ENCODE measurements at regions of chr1 and their contacts with region 1.

Region 1: DNA sequence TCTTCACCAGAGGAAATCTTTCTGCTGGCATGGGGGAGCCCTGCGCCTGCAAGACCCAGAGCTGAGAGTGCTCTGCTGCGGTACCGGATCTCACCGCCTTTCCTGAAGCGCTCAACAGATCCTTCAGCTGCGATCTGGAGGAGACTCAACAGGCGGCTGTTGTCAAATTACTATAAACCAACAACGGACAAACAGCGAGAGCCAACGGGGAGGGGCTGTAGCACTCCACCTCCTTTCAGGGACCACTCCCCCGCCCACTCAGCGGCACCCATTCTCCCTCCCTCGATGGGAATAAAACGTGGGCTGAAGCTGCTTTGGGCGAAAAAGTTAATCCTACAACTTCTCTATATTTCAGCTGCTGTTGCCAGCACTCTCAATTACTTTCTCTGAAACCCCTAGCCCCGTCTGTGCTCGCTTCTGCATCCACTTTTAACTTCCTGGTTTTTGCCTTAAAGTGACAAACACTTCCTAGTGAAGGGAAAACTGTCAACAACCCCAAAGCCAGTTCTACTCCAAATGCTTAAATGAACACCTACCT is at the start of gene FMO5:
- DNase-seq: peak; percentile 71
- H3K4me3 Mint-ChIP-seq: peak within 1 kb of the TSS; percentile 90
- H3K27ac Mint-ChIP-seq: no peak within 1 kb of the TSS
- H3K4me1 Mint-ChIP-seq: peaks cover 7% of the 10 kb centered on the region
- H3K27me3 Mint-ChIP-seq: no peaks in the 10 kb centered on the region
- total RNA-seq, gene FMO5: 0.14 TPM in 1 of 2 experiments, not detected in the other

Region 2: DNA sequence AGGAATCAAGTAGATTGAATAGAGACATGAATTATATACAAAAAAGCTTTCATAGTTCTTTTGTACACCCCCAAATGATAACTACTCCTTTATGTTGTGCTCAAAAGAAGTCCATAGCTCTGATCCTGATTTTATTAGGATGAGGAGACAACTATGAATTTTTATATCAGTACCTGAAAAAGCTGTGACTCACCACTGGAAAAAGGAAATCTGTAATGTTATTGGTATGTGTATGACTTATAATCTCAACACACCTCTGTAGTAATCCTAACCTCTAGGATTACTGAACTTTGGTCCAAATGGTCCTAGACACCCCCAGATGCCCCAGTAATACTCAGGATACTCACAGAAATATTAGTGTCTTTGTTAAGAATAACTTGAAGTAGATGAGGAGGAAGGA is 63.2 kb before region 1 on chr1:
- CTCF ChIA-PET with region 1: no interaction called
- intact Hi-C with region 1: no loop called
- DNase-seq: no peak
- H3K4me3 Mint-ChIP-seq: no peak overlapping the region
- H3K27ac Mint-ChIP-seq: no peak overlapping the region
- H3K4me1 Mint-ChIP-seq: no peaks in the 10 kb centered on the region
- H3K27me3 Mint-ChIP-seq: no peaks in the 10 kb centered on the region

Region 3: DNA sequence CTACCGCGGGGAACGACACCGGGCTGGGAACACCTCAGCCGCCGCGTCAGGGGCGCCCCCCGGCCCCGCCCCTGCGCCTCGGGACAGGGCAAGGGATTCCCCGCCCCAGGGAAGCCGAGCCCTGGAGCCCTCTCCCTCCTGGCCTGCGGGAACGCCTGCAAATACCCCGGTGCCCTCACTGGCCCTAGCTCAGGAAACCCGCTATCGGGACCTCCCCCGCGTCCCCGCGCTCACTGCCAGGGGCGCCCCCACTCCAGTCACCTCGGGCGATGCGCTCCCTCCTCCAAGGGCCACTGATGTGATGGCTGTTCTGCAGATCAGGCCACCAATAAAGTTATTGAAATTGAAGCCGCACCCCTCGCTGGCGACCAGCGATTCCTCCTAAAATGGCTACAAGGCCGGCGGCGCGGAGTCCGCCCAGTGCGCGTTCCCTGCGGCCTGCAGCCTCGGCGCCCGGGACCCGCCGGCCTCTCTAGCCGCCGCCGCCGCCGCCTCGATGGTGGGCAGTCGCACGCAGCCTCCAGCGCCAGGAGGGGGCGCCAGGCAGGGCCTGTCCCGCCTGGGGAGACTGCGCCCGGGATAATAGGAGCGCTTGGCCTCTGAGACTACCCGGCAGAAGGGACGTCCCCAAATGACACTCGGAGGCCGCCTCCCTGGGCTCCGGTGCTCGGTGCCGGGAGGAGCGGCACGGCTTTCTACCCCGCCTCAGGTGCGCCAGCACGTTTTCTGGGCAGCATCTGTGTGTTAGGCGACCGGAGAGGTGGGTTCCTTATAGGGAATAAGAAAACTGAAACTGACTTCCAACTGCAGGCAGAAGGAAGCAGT is 52.9 kb before region 1 on chr1 and contains the start of gene PRKAB2:
- CTCF ChIA-PET with region 1: no interaction called
- intact Hi-C with region 1: loop called (anchors 1 kb)
- DNase-seq: peak; percentile 91
- H3K4me3 Mint-ChIP-seq: peak within 1 kb of the TSS; percentile 98
- H3K27ac Mint-ChIP-seq: peak within 1 kb of the TSS; percentile 96
- H3K4me1 Mint-ChIP-seq: peaks cover 32% of the 10 kb centered on the region
- H3K27me3 Mint-ChIP-seq: peaks cover 1% of the 10 kb centered on the region
- total RNA-seq, gene PRKAB2: 3.4 to 4.4 TPM

Region 4: DNA sequence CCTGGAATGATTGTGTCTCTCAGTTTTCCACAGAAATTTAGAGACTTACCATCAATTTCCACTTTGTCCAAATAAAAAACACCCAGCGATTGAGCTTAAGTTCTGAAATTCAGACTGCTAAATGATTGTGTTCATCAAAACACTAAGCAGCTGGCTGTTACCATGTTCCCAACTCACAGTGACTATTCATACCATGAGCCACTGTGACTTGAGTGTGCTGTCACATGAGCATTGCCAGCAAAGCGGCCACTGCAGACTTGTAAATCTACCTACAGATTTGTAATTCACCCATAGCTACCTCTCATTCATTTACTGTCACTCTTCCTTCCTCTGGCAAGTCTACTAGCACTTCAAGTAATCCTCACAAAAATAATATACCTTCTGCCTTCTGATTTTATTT is 35.7 kb before region 1 on chr1:
- CTCF ChIA-PET with region 1: no interaction called
- intact Hi-C with region 1: no loop called
- DNase-seq: no peak
- H3K4me3 Mint-ChIP-seq: no peak overlapping the region
- H3K27ac Mint-ChIP-seq: no peak overlapping the region
- H3K4me1 Mint-ChIP-seq: no peaks in the 10 kb centered on the region
- H3K27me3 Mint-ChIP-seq: no peaks in the 10 kb centered on the region

Region 5: GRCh38 chr1:147264158-147264768 is 39.0 kb after region 1 on chr1:
- CTCF ChIA-PET with region 1: no interaction called
- intact Hi-C with region 1: no loop called
- DNase-seq: no peak
- H3K4me3 Mint-ChIP-seq: no peak overlapping the region
- H3K27ac Mint-ChIP-seq: no peak overlapping the region
- H3K4me1 Mint-ChIP-seq: no peaks in the 10 kb centered on the region
- H3K27me3 Mint-ChIP-seq: no peaks in the 10 kb centered on the region

Region 6: DNA sequence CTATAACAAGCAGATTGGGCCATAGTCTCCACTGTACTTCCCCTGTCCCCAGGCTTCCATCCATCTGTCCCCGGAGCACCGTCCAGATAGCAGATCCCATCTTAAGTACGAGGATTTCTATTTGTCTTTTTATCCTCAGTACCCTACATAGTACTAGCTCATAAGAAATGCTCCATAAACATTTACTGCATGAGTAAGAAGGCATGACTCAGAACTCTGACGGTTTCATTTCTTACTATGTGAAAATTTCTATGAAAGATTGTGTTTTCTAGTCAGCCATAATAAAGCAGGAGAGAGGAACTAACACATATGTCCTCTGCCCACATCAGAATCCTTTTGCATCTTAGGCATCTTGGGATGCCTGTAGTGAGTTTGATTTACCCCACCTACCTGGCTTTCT is 66.8 kb after region 1 on chr1:
- CTCF ChIA-PET with region 1: no interaction called
- intact Hi-C with region 1: no loop called
- DNase-seq: no peak
- H3K4me3 Mint-ChIP-seq: no peak overlapping the region
- H3K27ac Mint-ChIP-seq: no peak overlapping the region
- H3K4me1 Mint-ChIP-seq: peaks cover 12% of the 10 kb centered on the region
- H3K27me3 Mint-ChIP-seq: no peaks in the 10 kb centered on the region

Measured in activated naive CD4-positive, alpha-beta T cell treated with anti-CD3 and anti-CD28 coated beads for 36 hours (primary cell).